ENCODE measurements at regions of chr12 and their contacts with region 1.

Region 1: GRCh38 chr12:6470375-6471163 is at the start of gene VAMP1:
- DNase-seq: peak; percentile 100
- H3K4me3 Mint-ChIP-seq: peak within 1 kb of the TSS; percentile 96
- H3K27ac Mint-ChIP-seq: peak within 1 kb of the TSS; percentile 92
- H3K4me1 Mint-ChIP-seq: peaks cover 56% of the 10 kb centered on the region
- H3K27me3 Mint-ChIP-seq: peaks cover 6% of the 10 kb centered on the region
- total RNA-seq, gene VAMP1: 61.4 to 73.4 TPM

Region 2: GRCh38 chr12:6423267-6424007 is 47.1 kb before region 1 on chr12:
- CTCF ChIA-PET with region 1: interaction called, 18 read pairs
- POLR2A ChIA-PET with region 1: interaction called, 3 read pairs
- DNase-seq: peak; percentile 87
- H3K4me3 Mint-ChIP-seq: no peak overlapping the region
- H3K27ac Mint-ChIP-seq: peak overlapping the region; percentile 26
- H3K4me1 Mint-ChIP-seq: peaks cover 47% of the 10 kb centered on the region
- H3K27me3 Mint-ChIP-seq: peaks cover 2% of the 10 kb centered on the region

Region 3: DNA sequence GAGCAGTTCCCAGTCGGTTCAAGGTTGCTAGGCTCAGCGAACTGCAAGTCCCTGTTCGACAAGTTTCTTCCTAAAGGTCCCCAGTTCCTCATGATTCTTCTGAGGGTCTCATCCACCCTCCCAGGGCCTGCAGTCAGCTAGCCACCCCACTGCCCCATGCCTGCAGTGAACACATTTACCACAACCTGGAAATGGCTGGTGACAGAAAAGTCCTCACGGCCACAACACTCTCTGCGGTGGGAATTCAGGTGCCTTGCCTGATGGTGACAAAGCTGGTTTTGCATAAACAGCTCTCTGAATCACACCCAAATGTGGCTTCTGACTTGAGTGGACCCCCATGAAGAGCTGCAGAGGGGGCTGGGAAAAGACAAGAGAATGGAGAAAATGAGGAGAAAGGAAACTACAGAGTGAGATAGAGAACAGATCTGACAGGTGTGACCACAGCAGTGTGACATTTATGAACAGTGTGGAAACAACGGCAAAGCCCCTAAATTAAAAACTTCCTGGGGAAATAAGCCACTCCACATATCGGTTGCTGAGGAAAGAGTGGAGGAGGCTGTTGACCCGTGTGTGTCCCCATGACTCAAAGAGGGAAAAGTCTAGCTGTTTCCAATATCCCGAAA is 27.1 kb before region 1 on chr12:
- CTCF ChIA-PET with region 1: interaction called, 31 read pairs
- POLR2A ChIA-PET with region 1: interaction called, 3 read pairs
- DNase-seq: no peak
- H3K4me3 Mint-ChIP-seq: peak overlapping the region; percentile 90
- H3K27ac Mint-ChIP-seq: peak overlapping the region; percentile 89
- H3K4me1 Mint-ChIP-seq: peaks cover 54% of the 10 kb centered on the region
- H3K27me3 Mint-ChIP-seq: no peaks in the 10 kb centered on the region

Region 4: GRCh38 chr12:6493497-6494257 is 23.1 kb after region 1 on chr12 and contains the start of gene NCAPD2:
- CTCF ChIA-PET with region 1: interaction called, 7 read pairs
- POLR2A ChIA-PET with region 1: interaction called, 12 read pairs
- DNase-seq: peak; percentile 98
- H3K4me3 Mint-ChIP-seq: peak within 1 kb of the TSS; percentile 89
- H3K27ac Mint-ChIP-seq: peak within 1 kb of the TSS; percentile 97
- H3K4me1 Mint-ChIP-seq: peaks cover 38% of the 10 kb centered on the region
- H3K27me3 Mint-ChIP-seq: no peaks in the 10 kb centered on the region
- total RNA-seq, gene NCAPD2: 191 to 202 TPM

Region 5: DNA sequence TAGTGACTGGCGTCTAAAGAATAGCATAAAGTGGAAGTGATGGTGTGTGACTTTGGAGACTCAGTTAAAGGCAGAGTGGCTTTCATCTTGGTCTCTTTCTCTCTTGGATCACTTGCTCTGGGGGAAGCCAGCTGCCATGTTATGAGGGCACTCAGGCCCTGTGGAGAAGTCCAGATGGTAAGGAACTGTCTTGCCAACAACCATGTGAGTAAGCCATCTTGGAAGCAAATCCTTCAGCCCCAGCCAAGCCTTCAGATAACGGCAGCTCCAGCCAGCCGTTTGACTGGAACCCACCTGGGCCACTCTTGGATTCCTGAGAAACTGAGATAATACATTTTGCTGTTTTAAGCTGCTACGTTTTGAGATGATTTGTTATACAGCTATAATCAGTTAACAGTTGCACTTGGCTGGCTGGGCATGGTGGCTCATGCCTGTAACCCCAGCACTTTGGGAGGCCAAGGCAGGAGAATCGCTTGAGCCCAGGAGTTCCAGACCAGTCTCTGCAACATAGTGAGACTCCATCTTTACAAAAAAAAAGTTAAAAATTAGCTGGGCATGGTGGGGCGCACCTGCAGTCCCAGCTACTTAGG is 426.4 kb after region 1 on chr12:
- CTCF ChIA-PET with region 1: no interaction called
- POLR2A ChIA-PET with region 1: interaction called, 10 read pairs
- DNase-seq: no peak
- H3K4me3 Mint-ChIP-seq: no peak overlapping the region
- H3K27ac Mint-ChIP-seq: no peak overlapping the region
- H3K4me1 Mint-ChIP-seq: peaks cover 19% of the 10 kb centered on the region
- H3K27me3 Mint-ChIP-seq: no peaks in the 10 kb centered on the region